Activated CD4-positive, alpha-beta memory T cell treated with anti-CD3 and anti-CD28 coated beads, Interleukin-2, amount 10 ng/mL, durations not matched to agents 7 days and 5 days (primary cell): ENCODE measurements at regions of chr14 and their contacts with region 1.

Region 1: DNA sequence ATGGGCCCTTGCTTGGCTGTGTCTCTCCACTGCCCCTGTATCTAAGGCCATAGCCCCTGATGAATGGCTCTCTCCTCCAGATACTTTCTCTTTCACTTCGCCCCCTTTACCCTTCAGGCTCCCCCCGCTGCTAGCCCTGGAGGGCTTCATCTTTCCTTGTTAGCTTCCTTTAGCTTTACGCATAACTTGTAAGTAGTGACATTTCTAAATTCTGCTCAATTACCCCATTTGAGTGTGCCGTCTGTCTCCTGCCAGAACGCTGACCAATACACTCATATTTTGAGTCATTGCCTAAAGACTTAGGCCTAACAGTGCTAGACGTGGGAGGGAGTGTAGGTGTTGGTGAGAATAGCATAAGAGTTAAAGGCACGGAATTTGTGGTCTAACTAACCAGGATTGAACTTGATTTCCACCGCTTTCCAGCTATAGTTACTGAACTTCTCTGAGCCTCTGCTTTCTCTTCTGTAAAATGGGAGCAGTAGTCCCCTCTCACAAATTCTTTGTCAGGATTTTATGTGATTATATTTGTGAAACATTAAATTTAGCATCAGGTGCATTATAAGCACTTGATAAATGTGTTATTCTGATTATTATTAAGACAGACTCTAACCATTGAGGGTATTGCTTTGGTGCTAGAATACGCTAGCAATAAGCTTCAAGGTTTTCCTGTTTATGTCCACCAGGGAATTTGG is 129.3 kb downstream of the ZFP36L1 start:
- DNase-seq: peak; percentile 33
- H3K4me3 Mint-ChIP-seq: peak overlapping the region; percentile 70
- H3K27ac Mint-ChIP-seq: peak overlapping the region; percentile 79
- H3K4me1 Mint-ChIP-seq: peaks cover 34% of the 10 kb centered on the region
- H3K27me3 Mint-ChIP-seq: no peaks in the 10 kb centered on the region

Region 2: DNA sequence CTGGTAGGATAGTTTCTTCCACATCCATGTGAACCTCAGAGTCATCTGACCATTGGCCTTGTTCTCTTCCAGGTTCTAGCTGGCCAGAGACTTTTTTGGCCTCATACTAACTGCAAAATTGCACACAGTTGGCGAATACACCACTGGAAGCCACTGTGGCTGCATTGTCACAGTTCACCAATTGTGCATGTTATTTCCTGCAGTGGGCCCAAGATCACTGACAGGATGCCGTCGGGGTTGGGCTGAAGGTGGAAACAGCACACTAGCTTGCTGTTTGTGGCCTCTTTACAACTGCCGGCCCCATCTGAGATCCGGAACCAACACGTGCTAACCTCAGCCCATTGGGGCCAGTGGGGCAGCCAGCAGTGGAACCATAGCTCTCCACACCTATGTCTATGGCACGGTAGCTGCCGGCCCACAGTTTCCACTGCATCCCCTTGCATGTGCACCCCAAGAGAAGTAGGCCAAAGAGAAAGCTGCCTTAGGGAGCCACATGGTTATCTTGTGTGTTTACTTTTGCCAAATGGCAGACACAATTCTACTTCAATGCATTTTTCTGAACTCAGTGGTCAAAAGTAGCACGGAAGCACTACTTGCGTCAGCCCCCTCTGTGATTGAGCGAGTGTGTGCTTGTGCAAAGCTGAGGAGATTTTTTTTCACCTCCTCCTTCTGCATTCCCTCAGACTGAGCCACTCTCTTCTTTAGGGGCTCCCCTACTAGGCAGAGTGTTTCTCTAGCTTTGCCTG is 380.0 kb before region 1 on chr14:
- CTCF ChIA-PET with region 1: no interaction called
- POLR2A ChIA-PET with region 1: interaction called, 11 read pairs
- DNase-seq: peak; percentile 79
- H3K4me3 Mint-ChIP-seq: peak overlapping the region; percentile 47
- H3K27ac Mint-ChIP-seq: peak overlapping the region; percentile 96
- H3K4me1 Mint-ChIP-seq: peaks cover 48% of the 10 kb centered on the region
- H3K27me3 Mint-ChIP-seq: no peaks in the 10 kb centered on the region

Region 3: GRCh38 chr14:68495101-68496039 is 168.2 kb before region 1 on chr14:
- CTCF ChIA-PET with region 1: no interaction called
- POLR2A ChIA-PET with region 1: no interaction called
- DNase-seq: no peak
- H3K4me3 Mint-ChIP-seq: no peak overlapping the region
- H3K27ac Mint-ChIP-seq: no peak overlapping the region
- H3K4me1 Mint-ChIP-seq: no peaks in the 10 kb centered on the region
- H3K27me3 Mint-ChIP-seq: no peaks in the 10 kb centered on the region

Region 4: GRCh38 chr14:68718023-68718995 is 54.8 kb after region 1 on chr14:
- CTCF ChIA-PET with region 1: no interaction called
- POLR2A ChIA-PET with region 1: interaction called, 15 read pairs
- DNase-seq: peak; percentile 31
- H3K4me3 Mint-ChIP-seq: no peak overlapping the region
- H3K27ac Mint-ChIP-seq: no peak overlapping the region
- H3K4me1 Mint-ChIP-seq: peaks cover 38% of the 10 kb centered on the region
- H3K27me3 Mint-ChIP-seq: no peaks in the 10 kb centered on the region